ENCODE measurements at regions of chr7 and their contacts with region 1.

Region 1: GRCh38 chr7:80918909-80919662 is at the start of gene SEMA3C:
- DNase-seq: peak; percentile 94
- total RNA-seq, gene SEMA3C: 60.8 TPM

Region 2: DNA sequence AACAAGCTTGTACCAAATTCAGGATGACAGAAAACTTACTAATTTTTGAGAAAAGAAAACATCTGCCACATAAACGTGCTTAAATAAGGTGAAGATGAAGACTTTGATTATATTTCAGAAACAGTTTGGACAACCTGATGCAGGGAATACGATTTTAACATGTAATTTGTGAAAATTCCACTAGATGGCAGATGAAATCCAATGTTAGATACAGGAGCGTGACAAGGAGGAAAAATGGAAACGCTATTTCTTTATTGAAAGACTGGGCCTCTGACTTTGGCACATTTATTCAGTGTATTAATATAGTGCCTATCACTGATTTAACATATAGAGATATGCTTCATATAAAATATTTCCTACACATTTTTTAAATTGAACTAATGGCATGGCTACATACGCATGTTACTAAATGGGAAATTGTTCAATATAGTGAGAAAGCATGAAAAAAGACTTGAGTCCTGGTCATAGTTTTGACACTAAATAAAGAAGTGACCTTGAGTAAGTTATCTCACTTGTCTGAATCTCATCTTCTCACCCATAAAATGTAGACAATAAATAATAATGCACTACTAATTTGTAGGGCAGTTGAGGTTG is 219.9 kb before region 1 on chr7:
- intact Hi-C with region 1: loop called (anchors 5 kb)
- DNase-seq: no peak

Region 3: GRCh38 chr7:80794631-80795573 is 124.2 kb before region 1 on chr7:
- intact Hi-C with region 1: loop called (anchors 5 kb)
- DNase-seq: no peak

Region 4: GRCh38 chr7:80883188-80884025 is 35.7 kb before region 1 on chr7:
- intact Hi-C with region 1: loop called (anchors 5 kb)
- DNase-seq: no peak

Region 5: DNA sequence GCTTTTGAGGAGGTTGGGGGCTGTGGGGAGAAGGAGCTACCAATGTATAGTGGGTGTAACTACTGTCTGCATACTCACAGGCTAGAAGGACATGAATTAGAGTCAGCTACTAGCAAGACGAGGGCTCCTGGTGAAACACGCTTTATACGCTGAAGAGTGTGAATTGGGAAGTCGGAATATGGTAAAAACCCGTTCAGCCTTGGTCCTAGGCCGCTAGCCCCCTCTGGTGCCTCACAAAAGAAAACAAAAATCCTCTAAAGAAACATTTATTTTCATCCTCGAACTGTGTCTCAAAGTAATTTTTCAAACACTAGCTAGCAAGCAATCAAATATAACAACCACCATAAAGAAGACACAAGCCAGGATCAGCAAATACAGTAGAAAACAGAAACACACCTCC is 337.9 kb after region 1 on chr7:
- intact Hi-C with region 1: loop called (anchors 1 kb)
- DNase-seq: no peak

Region 6: GRCh38 chr7:81469869-81470723 is 551.0 kb after region 1 on chr7:
- intact Hi-C with region 1: loop called (anchors 10 kb)
- DNase-seq: peak; percentile 82

Measured in cardiac septum (tissue), 1 donor.